IMR-90 (cell line): ENCODE measurements at regions of chr7 and their contacts with region 1.

Region 1: GRCh38 chr7:668139-668931 is 58.2 kb upstream of the DNAAF5 start:
- DNase-seq: peak; percentile 85
- ATAC-seq: peak; percentile 88
- H3K4me3 ChIP-seq: no peak overlapping the region
- H3K27ac ChIP-seq: peak overlapping the region; percentile 34; the same call in 1 of the 2 replicates
- H3K4me1 ChIP-seq: peaks cover 16% of the 10 kb centered on the region
- H3K27me3 ChIP-seq: no peaks in the 10 kb centered on the region
- CTCF ChIP-seq: no peak
- POLR2A ChIP-seq: no peak
- RAD21 ChIP-seq: no peak

Region 2: DNA sequence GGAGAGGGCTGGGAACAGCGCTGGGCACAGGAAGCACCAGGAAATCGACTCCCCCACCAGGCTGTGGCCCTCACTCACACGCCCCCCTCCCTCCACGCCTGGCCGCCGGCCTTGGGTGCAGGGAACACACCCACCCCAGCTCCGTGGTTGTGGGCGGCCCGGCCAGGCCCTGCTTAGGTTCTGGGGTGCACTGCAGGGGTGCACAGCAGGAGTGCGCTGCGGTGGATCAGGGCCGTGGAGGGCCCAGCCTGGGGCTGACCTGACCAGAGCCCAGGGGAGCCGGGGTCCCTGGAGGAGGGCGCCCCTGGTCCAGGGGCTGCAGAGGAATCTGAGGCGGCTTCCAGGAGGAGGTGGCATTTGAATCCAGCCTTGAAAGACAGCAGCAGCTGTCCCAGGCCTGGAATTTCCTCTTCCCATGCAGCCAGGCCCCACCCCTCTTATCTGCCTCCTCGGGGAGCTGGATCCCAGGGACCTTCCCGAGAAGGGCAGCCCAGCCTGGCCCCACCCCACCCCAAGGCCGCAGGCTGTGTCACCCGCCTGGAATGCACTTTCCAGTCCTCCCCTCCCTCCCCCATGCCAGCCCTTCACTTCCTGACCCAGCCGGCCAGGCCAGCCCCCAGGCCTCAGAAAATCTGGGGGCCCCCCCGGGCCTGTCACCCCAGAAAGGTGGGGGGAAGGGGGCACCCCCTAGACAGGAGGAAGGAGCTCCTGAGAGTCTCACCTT is 130.3 kb before region 1 on chr7:
- CTCF ChIA-PET with region 1: no interaction called
- POLR2A ChIA-PET with region 1: no interaction called
- dilution Hi-C with region 1: no loop called
- in situ Hi-C with region 1: no loop called
- intact Hi-C with region 1: loop called (anchors 5 kb)
- DNase-seq: peak; percentile 89
- ATAC-seq: peak; percentile 87
- H3K4me3 ChIP-seq: no peak overlapping the region
- H3K27ac ChIP-seq: peak overlapping the region; percentile 77
- H3K4me1 ChIP-seq: peaks cover 31% of the 10 kb centered on the region
- H3K27me3 ChIP-seq: peaks cover 6% of the 10 kb centered on the region; the same call in 1 of the 2 replicates
- CTCF ChIP-seq: no peak
- POLR2A ChIP-seq: no peak
- RAD21 ChIP-seq: peak; percentile 26; the same call in 1 of the 2 replicates

Region 3: GRCh38 chr7:786472-787255 is 118.3 kb after region 1 on chr7:
- CTCF ChIA-PET with region 1: no interaction called
- POLR2A ChIA-PET with region 1: no interaction called
- dilution Hi-C with region 1: no loop called
- in situ Hi-C with region 1: no loop called
- intact Hi-C with region 1: no loop called
- DNase-seq: peak; percentile 51
- ATAC-seq: peak; percentile 100
- H3K4me3 ChIP-seq: no peak overlapping the region
- H3K27ac ChIP-seq: peak overlapping the region; percentile 16; the same call in 1 of the 2 replicates
- H3K4me1 ChIP-seq: no peaks in the 10 kb centered on the region
- H3K27me3 ChIP-seq: no peaks in the 10 kb centered on the region
- CTCF ChIP-seq: peak; percentile 86
- POLR2A ChIP-seq: no peak
- RAD21 ChIP-seq: peak; percentile 85